ENCODE measurements at regions of chr1 and their contacts with region 1.

Region 1: DNA sequence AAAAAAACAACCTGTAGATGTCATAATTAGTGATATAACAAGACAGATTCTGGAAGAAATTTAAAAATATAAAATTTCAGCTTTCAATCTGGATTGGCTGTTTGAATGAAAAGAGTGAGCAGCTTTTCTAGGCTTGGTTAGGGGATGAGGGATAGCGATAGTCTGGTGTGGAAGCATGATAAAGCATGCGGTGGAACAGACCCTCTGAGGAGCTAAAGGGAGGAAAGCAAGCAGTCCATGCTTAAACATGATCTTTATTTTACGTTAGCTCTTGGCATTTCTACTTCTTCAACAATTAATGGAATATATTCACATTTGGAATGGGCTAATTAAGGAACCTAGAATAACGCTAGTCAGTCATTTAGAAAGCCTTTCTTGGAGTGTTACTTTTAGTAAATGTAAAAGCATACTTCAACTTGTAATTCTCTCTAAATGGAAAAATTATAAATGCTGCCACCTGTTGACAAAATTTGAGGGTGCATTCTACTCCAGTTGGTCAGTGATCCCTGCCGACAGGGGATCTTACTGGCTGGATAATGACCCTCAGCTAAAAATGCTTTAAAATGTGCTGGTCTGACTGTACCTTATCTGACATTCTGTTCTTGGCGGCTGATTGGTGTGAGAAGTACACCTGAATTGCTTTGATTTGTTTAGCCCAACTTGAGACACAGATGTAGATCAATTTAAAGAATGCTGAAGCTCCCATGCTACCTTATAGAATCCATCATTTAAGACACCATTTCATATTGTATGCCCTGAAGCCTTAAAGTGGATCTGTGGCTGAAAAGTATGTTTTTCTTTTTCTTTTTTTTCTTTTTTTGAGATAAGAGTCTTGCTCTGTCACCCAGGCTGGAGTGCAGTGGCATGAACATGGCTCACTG is 61.2 kb downstream of the AK4 start:
- DNase-seq: peak; percentile 57
- H3K4me3 Mint-ChIP-seq: no peak overlapping the region
- H3K27ac Mint-ChIP-seq: no peak overlapping the region
- H3K4me1 Mint-ChIP-seq: no peaks in the 10 kb centered on the region
- H3K27me3 Mint-ChIP-seq: no peaks in the 10 kb centered on the region
- CTCF ChIP-seq: peak; percentile 75

Region 2: GRCh38 chr1:65149351-65150107 is 59.7 kb before region 1 on chr1:
- CTCF ChIA-PET with region 1: interaction called, 5 read pairs
- intact Hi-C with region 1: loop called (anchors 5 kb)
- DNase-seq: no peak
- H3K4me3 Mint-ChIP-seq: peak overlapping the region; percentile 87
- H3K27ac Mint-ChIP-seq: no peak overlapping the region
- H3K4me1 Mint-ChIP-seq: peaks cover 57% of the 10 kb centered on the region
- H3K27me3 Mint-ChIP-seq: no peaks in the 10 kb centered on the region
- CTCF ChIP-seq: no peak